ENCODE measurements at regions of chr2 and their contacts with region 1.

Region 1: GRCh38 chr2:202265467-202266277 is at the start of gene NOP58:
- DNase-seq: peak; percentile 95
- ATAC-seq: peak; percentile 86
- H3K4me3 Mint-ChIP-seq: peak within 1 kb of the TSS; percentile 53
- H3K27ac Mint-ChIP-seq: peak within 1 kb of the TSS; percentile 75
- H3K4me1 Mint-ChIP-seq: peaks cover 15% of the 10 kb centered on the region
- H3K27me3 Mint-ChIP-seq: no peaks in the 10 kb centered on the region
- CTCF ChIP-seq: no peak
- total RNA-seq, gene NOP58: 161 to 170 TPM

Region 2: DNA sequence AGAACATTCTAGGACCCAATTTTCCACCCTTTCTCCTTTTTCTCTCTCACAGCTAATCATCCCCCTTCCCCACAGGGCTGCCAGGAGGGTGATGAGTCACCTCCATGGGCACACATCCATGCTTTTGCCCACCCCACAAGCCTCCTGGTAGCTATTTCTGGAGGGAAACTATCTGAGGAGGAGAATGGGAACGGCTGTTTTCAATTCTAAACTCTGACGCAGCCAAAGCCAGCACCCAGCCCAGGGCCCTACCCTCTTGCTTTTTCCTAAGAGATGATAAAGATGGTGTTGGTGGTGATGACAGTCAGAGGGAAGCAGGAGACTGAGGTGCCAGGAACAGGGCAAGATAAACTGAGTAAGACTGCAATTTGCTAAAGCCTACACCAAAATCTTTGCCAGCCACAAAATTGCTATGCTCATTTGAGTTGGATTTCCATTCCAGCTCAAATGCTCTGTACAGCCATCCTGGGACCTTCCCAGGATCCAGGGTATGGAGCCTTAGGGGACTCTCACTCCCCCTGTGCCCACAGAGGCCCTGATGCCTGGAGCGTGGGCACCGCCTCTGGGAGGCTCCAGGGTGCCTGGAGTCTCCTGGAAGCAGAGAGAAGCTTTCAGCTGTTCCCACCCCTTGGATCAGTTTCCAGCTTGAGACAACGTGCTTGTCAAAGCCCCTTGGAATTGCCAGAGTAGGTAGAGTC is 294.0 kb before region 1 on chr2:
- CTCF ChIA-PET with region 1: no interaction called
- POLR2A ChIA-PET with region 1: no interaction called
- intact Hi-C with region 1: no loop called
- DNase-seq: no peak
- ATAC-seq: no peak
- H3K4me3 Mint-ChIP-seq: no peak overlapping the region
- H3K27ac Mint-ChIP-seq: no peak overlapping the region
- H3K4me1 Mint-ChIP-seq: no peaks in the 10 kb centered on the region
- H3K27me3 Mint-ChIP-seq: peaks cover 5% of the 10 kb centered on the region
- CTCF ChIP-seq: no peak

Region 3: GRCh38 chr2:202056392-202057010 is 209.2 kb before region 1 on chr2:
- CTCF ChIA-PET with region 1: no interaction called
- POLR2A ChIA-PET with region 1: no interaction called
- intact Hi-C with region 1: no loop called
- DNase-seq: no peak
- ATAC-seq: no peak
- H3K4me3 Mint-ChIP-seq: no peak overlapping the region
- H3K27ac Mint-ChIP-seq: no peak overlapping the region
- H3K4me1 Mint-ChIP-seq: no peaks in the 10 kb centered on the region
- H3K27me3 Mint-ChIP-seq: peaks cover 33% of the 10 kb centered on the region
- CTCF ChIP-seq: peak; percentile 25

Region 4: DNA sequence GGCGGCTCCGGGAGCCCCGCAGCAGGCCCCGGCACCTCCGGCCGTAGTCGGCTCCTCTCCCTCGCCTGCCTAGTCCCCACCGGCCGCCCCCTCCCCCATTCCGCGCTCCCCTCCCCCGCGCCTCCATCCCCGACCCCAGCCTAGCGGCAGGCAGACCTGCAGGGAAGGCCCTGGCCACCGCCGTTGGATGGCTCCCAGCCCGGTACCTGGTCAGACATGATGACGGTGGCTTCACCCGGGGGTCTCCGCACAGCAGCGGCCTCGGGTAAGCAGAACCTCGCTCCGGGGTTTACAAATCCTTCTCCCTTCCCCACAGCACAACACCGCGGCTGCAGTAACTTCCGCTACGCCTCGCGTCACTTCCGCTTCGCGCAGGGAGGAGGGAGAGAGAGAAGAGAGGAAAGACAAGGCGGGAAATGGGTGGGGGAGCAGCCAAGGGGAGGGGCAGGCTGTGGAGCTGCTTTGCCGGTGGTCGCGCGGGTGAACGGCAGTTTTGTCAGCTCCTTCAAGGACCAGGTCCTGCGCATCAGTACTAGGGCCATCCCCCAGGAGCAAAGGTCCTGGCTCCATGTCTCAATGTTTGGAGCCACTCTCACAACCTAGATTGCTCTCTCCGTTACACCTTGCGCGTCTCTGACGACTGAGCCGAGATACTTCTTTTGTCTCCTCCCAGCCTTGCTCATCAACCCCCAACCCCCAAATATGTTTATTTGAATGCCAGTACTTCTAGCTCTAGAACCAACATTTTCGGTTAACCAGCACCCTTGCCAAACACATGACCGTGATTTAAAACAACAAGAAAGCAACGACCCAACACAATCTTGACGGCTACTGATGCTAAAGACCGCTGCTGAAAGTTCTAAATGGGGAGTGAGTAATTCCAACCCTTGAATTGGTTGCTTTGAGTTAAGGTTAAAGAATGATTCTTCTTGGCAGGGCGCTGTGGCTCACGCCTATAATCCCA is 27.2 kb before region 1 on chr2 and contains the start of gene SUMO1:
- CTCF ChIA-PET with region 1: no interaction called
- POLR2A ChIA-PET with region 1: interaction called, 50 read pairs
- intact Hi-C with region 1: no loop called
- DNase-seq: peak; percentile 96
- ATAC-seq: peak; percentile 96
- H3K4me3 Mint-ChIP-seq: peak within 1 kb of the TSS; percentile 98
- H3K27ac Mint-ChIP-seq: peak within 1 kb of the TSS; percentile 99
- H3K4me1 Mint-ChIP-seq: peaks cover 23% of the 10 kb centered on the region
- H3K27me3 Mint-ChIP-seq: no peaks in the 10 kb centered on the region
- CTCF ChIP-seq: no peak
- total RNA-seq, gene SUMO1: 114 to 115 TPM

Region 5: GRCh38 chr2:202299712-202300111 is 34.0 kb after region 1 on chr2:
- CTCF ChIA-PET with region 1: interaction called, 4 read pairs
- POLR2A ChIA-PET with region 1: interaction called, 15 read pairs
- intact Hi-C with region 1: no loop called
- DNase-seq: no peak
- ATAC-seq: peak; percentile 79
- H3K4me3 Mint-ChIP-seq: no peak overlapping the region
- H3K27ac Mint-ChIP-seq: peak overlapping the region; percentile 82
- H3K4me1 Mint-ChIP-seq: peaks cover 41% of the 10 kb centered on the region
- H3K27me3 Mint-ChIP-seq: no peaks in the 10 kb centered on the region
- CTCF ChIP-seq: no peak

Region 6: GRCh38 chr2:202317080-202317857 is 51.6 kb after region 1 on chr2:
- CTCF ChIA-PET with region 1: no interaction called
- POLR2A ChIA-PET with region 1: no interaction called
- intact Hi-C with region 1: no loop called
- DNase-seq: no peak
- ATAC-seq: no peak
- H3K4me3 Mint-ChIP-seq: no peak overlapping the region
- H3K27ac Mint-ChIP-seq: no peak overlapping the region
- H3K4me1 Mint-ChIP-seq: no peaks in the 10 kb centered on the region
- H3K27me3 Mint-ChIP-seq: no peaks in the 10 kb centered on the region
- CTCF ChIP-seq: no peak

Region 7: DNA sequence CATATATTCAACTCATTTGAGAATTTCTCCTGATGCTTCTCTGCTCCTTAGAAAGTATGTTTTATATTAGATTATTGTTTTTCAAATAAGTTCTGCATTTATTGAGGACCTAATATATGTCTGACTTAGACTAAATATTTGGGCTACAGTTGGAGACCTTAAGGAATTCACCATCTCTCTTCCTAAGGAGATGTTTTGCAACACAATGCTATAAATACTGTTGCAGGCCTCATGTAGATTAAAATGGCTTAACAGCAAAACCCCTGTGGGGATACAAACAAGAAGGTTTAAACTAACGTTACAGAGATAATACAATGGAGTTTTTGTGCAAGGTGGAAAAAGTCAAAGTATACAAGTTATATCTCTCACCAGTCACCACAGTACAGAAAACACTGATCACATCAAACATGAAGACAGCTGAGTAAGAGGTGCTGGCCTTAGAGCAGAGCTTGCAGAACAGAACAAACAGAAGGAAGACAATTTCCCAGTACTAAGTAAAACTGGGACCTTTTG is 90.4 kb after region 1 on chr2:
- CTCF ChIA-PET with region 1: no interaction called
- POLR2A ChIA-PET with region 1: no interaction called
- intact Hi-C with region 1: no loop called
- DNase-seq: no peak
- ATAC-seq: no peak
- H3K4me3 Mint-ChIP-seq: no peak overlapping the region
- H3K27ac Mint-ChIP-seq: no peak overlapping the region
- H3K4me1 Mint-ChIP-seq: no peaks in the 10 kb centered on the region
- H3K27me3 Mint-ChIP-seq: no peaks in the 10 kb centered on the region
- CTCF ChIP-seq: no peak